ENCODE measurements at regions of chr6 and their contacts with region 1.

Region 1: GRCh38 chr6:34414999-34415858 is 10.6 kb downstream of the RPS10 start:
- DNase-seq: peak in 31 of 35 experiments; percentile 9 to 71 (median 37)
- ATAC-seq: peak; percentile 65 to 82 (median 67)
- H3K4me3 ChIP-seq: no peak overlapping the region
- H3K4me3 Mint-ChIP-seq: no peak overlapping the region
- H3K27ac ChIP-seq: no peak overlapping the region
- H3K27ac Mint-ChIP-seq: peak overlapping the region in 1 of 2 donors; percentile 55
- H3K4me1 ChIP-seq: no peaks in the 10 kb centered on the region
- H3K4me1 Mint-ChIP-seq: peaks cover 0 to 8% (median 4%) of the 10 kb centered on the region in 3 donors
- H3K27me3 ChIP-seq: no peaks in the 10 kb centered on the region
- H3K27me3 Mint-ChIP-seq: no peaks in the 10 kb centered on the region

Region 2: GRCh38 chr6:34157851-34158250 is 257.4 kb before region 1 on chr6:
- CTCF ChIA-PET with region 1: interaction called, 8 to 10 read pairs
- POLR2A ChIA-PET with region 1: no interaction called
- DNase-seq: no peak
- ATAC-seq: no peak
- H3K4me3 ChIP-seq: no peak overlapping the region
- H3K4me3 Mint-ChIP-seq: no peak overlapping the region
- H3K27ac ChIP-seq: no peak overlapping the region
- H3K27ac Mint-ChIP-seq: no peak overlapping the region
- H3K4me1 ChIP-seq: peaks cover 4 to 13% of the 10 kb centered on the region in 2 experiments
- H3K4me1 Mint-ChIP-seq: peaks cover 0 to 10% (median 4%) of the 10 kb centered on the region in 3 donors
- H3K27me3 ChIP-seq: peaks cover 2 to 40% of the 10 kb centered on the region in 2 experiments
- H3K27me3 Mint-ChIP-seq: peaks cover 10 to 16% of the 10 kb centered on the region in 2 donors

Region 3: GRCh38 chr6:34196126-34196830 is 219.0 kb before region 1 on chr6:
- CTCF ChIA-PET with region 1: interaction called, 11 to 22 read pairs
- POLR2A ChIA-PET with region 1: interaction called in 1 of 2 experiments, 5 read pairs
- DNase-seq: peak; percentile 69 to 95 (median 86)
- ATAC-seq: peak; percentile 98 to 100 (median 99)
- H3K4me3 ChIP-seq: peak overlapping the region; percentile 65 to 66
- H3K4me3 Mint-ChIP-seq: peak overlapping the region; percentile 80 to 85 (median 83)
- H3K27ac ChIP-seq: no peak overlapping the region
- H3K27ac Mint-ChIP-seq: peak overlapping the region in 1 of 2 donors; percentile 79
- H3K4me1 ChIP-seq: peaks cover 0 to 12% of the 10 kb centered on the region in 2 experiments
- H3K4me1 Mint-ChIP-seq: peaks cover 4 to 8% (median 7%) of the 10 kb centered on the region in 3 donors
- H3K27me3 ChIP-seq: peaks cover 0 to 11% of the 10 kb centered on the region in 2 experiments
- H3K27me3 Mint-ChIP-seq: no peaks in the 10 kb centered on the region

Region 4: GRCh38 chr6:34248727-34249551 is 166.3 kb before region 1 on chr6 and contains the start of gene SMIM29:
- CTCF ChIA-PET with region 1: interaction called, 10 to 18 read pairs
- POLR2A ChIA-PET with region 1: no interaction called
- DNase-seq: peak; percentile 92 to 99 (median 97)
- ATAC-seq: peak; percentile 89 to 95 (median 90)
- H3K4me3 ChIP-seq: peak within 1 kb of the TSS; percentile 87 to 90
- H3K4me3 Mint-ChIP-seq: peak within 1 kb of the TSS; percentile 85 to 95 (median 90)
- H3K27ac ChIP-seq: peak within 1 kb of the TSS; percentile 90
- H3K27ac Mint-ChIP-seq: peak within 1 kb of the TSS; percentile 94 to 95
- H3K4me1 ChIP-seq: peaks cover 8 to 41% of the 10 kb centered on the region in 2 experiments
- H3K4me1 Mint-ChIP-seq: peaks cover 27 to 49% (median 40%) of the 10 kb centered on the region in 3 donors
- H3K27me3 ChIP-seq: no peaks in the 10 kb centered on the region
- H3K27me3 Mint-ChIP-seq: no peaks in the 10 kb centered on the region
- total RNA-seq, gene SMIM29: 16.4 to 33.8 (median 30.5) TPM

Region 5: GRCh38 chr6:34392497-34393190 is 22.6 kb before region 1 on chr6 and contains the start of gene NUDT3:
- CTCF ChIA-PET with region 1: interaction called in 1 of 2 experiments, 12 read pairs
- POLR2A ChIA-PET with region 1: interaction called, 3 to 7 read pairs
- DNase-seq: peak; percentile 85 to 97 (median 91)
- ATAC-seq: peak; percentile 83 to 87 (median 84)
- H3K4me3 ChIP-seq: peak within 1 kb of the TSS; percentile 66 to 81
- H3K4me3 Mint-ChIP-seq: peak within 1 kb of the TSS in 2 of 3 donors; percentile 72 to 98
- H3K27ac ChIP-seq: peak within 1 kb of the TSS; percentile 67
- H3K27ac Mint-ChIP-seq: peak within 1 kb of the TSS; percentile 96
- H3K4me1 ChIP-seq: peaks cover 13 to 23% of the 10 kb centered on the region in 2 experiments
- H3K4me1 Mint-ChIP-seq: peaks cover 22 to 28% (median 26%) of the 10 kb centered on the region in 3 donors
- H3K27me3 ChIP-seq: no peaks in the 10 kb centered on the region
- H3K27me3 Mint-ChIP-seq: no peaks in the 10 kb centered on the region
- total RNA-seq, gene NUDT3: 23.5 to 31.0 (median 28.9) TPM

Region 6: DNA sequence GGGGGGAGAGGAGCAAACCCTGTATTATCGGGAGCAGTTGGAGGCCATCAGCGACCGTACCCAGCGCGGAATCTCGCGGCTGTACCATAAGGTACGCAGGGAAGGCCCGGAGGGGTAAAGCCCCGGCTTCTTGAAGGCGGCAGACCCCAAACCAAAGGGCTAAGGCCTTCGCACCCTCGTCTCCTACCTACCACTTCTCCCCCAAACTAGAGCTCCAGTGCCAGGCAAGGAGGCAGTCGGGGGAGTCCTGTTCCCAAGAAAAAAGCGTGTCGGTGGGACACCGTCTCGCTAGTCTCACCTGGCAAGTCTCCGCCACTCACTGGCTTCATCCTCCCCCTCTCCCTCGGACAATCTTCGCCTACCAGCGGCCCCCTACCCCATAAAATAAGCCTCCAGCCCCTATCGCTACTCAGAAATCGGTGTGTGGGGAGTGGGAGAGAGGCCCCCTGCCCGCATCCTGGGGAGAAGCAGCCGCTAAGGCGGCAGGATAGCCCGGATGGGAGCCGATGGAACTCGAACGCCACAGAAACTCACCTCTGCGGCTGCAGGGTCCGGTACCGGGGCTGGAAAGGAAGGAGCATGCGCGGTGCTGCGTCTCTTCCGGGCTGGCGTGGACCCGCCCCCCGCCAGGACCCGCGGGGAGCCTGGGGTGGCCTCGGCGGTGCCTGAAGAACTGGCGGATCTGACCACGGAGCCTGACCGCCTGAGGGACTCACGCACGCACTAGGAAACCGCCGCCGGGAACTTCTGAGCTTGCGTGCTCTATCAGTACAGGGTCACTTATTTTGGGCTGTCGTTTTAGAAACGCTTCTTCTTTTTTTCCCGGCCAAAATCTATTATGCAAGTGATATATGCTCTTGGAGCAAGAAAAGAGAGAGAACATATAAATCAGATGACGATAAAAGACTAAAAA is 10.5 kb after region 1 on chr6 and contains the start of gene RPS10:
- CTCF ChIA-PET with region 1: interaction called, 9 to 10 read pairs
- POLR2A ChIA-PET with region 1: interaction called, 4 to 6 read pairs
- DNase-seq: peak; percentile 71 to 95 (median 85)
- ATAC-seq: peak; percentile 96 to 98 (median 98)
- H3K4me3 ChIP-seq: peak within 1 kb of the TSS; percentile 91 to 97
- H3K4me3 Mint-ChIP-seq: peak within 1 kb of the TSS; percentile 96 to 99 (median 98)
- H3K27ac ChIP-seq: peak within 1 kb of the TSS; percentile 84
- H3K27ac Mint-ChIP-seq: peak within 1 kb of the TSS; percentile 98
- H3K4me1 ChIP-seq: peaks cover 0 to 37% of the 10 kb centered on the region in 2 experiments
- H3K4me1 Mint-ChIP-seq: peaks cover 28 to 39% (median 38%) of the 10 kb centered on the region in 3 donors
- H3K27me3 ChIP-seq: no peaks in the 10 kb centered on the region
- H3K27me3 Mint-ChIP-seq: no peaks in the 10 kb centered on the region
- total RNA-seq, gene RPS10: 2,352 to 2,733 (median 2,512) TPM

Region 7: GRCh38 chr6:34508425-34508824 is 93.2 kb after region 1 on chr6:
- CTCF ChIA-PET with region 1: no interaction called
- POLR2A ChIA-PET with region 1: no interaction called
- DNase-seq: no peak
- ATAC-seq: no peak
- H3K4me3 ChIP-seq: no peak overlapping the region
- H3K4me3 Mint-ChIP-seq: no peak overlapping the region
- H3K27ac ChIP-seq: no peak overlapping the region
- H3K27ac Mint-ChIP-seq: no peak overlapping the region
- H3K4me1 ChIP-seq: no peaks in the 10 kb centered on the region
- H3K4me1 Mint-ChIP-seq: no peaks in the 10 kb centered on the region
- H3K27me3 ChIP-seq: peaks cover 0 to 5% of the 10 kb centered on the region in 2 experiments
- H3K27me3 Mint-ChIP-seq: peaks cover 0 to 14% of the 10 kb centered on the region in 2 donors

Region 8: DNA sequence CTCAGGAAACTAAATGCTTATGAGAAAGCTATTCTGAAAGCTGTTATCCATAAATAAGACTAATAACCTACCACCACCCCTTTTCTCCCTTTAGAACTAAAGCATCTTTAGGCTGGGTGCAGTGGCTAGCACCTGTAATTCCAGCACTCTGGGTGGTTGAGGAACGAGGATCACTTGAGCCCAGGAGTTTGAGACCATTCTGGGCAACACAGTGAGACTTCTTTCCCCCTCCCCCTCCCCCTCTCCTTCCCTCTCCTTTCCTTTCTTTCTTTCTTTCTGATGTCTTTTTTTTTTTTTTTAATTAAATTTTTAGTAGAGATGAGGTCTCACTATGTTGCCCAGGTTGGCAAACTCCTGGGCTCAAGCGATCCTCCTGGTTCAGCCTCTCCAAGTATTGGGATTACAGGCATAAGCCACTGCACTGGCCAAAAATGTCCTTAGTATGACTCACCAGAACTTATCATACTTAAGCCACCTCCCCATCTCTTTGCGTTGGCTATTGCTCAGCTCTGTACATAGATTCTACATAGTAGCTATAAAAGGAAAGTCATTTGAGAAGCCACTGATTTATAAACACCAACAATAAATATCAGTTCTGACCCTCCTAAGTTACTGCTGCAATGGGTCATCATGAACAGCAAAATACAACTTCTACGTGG is 195.7 kb after region 1 on chr6:
- CTCF ChIA-PET with region 1: interaction called in 1 of 2 experiments, 7 read pairs
- POLR2A ChIA-PET with region 1: interaction called in 1 of 2 experiments, 10 read pairs
- DNase-seq: no peak
- ATAC-seq: no peak
- H3K4me3 ChIP-seq: no peak overlapping the region
- H3K4me3 Mint-ChIP-seq: no peak overlapping the region
- H3K27ac ChIP-seq: no peak overlapping the region
- H3K27ac Mint-ChIP-seq: peak overlapping the region in 1 of 2 donors; percentile 18
- H3K4me1 ChIP-seq: no peaks in the 10 kb centered on the region
- H3K4me1 Mint-ChIP-seq: peaks cover 12 to 22% (median 15%) of the 10 kb centered on the region in 3 donors
- H3K27me3 ChIP-seq: no peaks in the 10 kb centered on the region
- H3K27me3 Mint-ChIP-seq: no peaks in the 10 kb centered on the region